ENCODE measurements at regions of chr10 and their contacts with region 1.

Region 1: DNA sequence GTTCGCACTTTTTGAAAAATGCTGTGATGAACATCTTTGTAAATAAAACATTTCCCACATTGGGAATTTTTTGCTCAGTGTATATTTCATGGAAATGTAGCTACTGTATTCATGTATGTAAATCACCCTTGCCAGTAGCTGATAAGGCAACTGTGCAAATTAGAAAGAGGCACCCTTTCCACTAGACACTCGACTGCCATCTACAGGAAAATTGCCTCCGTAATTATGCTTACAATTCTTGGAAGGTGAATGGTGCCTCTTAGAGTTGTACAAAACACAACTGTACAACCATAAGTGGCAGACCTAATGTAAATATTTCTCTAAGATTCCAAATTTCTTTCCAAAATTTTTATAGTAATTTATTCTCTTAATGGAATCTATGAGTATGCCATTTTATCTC is 491.7 kb downstream of the CCSER2 start:
- DNase-seq: peak in 1 of 2 experiments; percentile 28
- H3K4me3 ChIP-seq: no peak overlapping the region
- H3K4me3 Mint-ChIP-seq: no peak overlapping the region
- H3K27ac Mint-ChIP-seq: no peak overlapping the region
- H3K4me1 ChIP-seq: no peaks in the 10 kb centered on the region; the same call in 1 of the 2 replicates
- H3K4me1 Mint-ChIP-seq: peaks cover 17% of the 10 kb centered on the region
- H3K27me3 ChIP-seq: no peaks in the 10 kb centered on the region
- H3K27me3 Mint-ChIP-seq: peaks cover 3% of the 10 kb centered on the region
- CTCF ChIP-seq: peak; percentile 40 to 48

Region 2: GRCh38 chr10:84574102-84574501 is 246.0 kb before region 1 on chr10:
- CTCF ChIA-PET with region 1: no interaction called
- POLR2A ChIA-PET with region 1: no interaction called
- intact Hi-C with region 1: no loop called
- DNase-seq: no peak
- H3K4me3 ChIP-seq: no peak overlapping the region
- H3K4me3 Mint-ChIP-seq: no peak overlapping the region
- H3K27ac Mint-ChIP-seq: no peak overlapping the region
- H3K4me1 ChIP-seq: no peaks in the 10 kb centered on the region
- H3K4me1 Mint-ChIP-seq: no peaks in the 10 kb centered on the region
- H3K27me3 ChIP-seq: no peaks in the 10 kb centered on the region
- H3K27me3 Mint-ChIP-seq: peaks cover 1% of the 10 kb centered on the region
- CTCF ChIP-seq: peak; percentile 16 to 19

Region 3: GRCh38 chr10:84783386-84783785 is 36.7 kb before region 1 on chr10:
- CTCF ChIA-PET with region 1: no interaction called
- POLR2A ChIA-PET with region 1: no interaction called
- intact Hi-C with region 1: loop called (anchors 1 kb)
- DNase-seq: peak; percentile 45 to 57
- H3K4me3 ChIP-seq: no peak overlapping the region
- H3K4me3 Mint-ChIP-seq: no peak overlapping the region
- H3K27ac Mint-ChIP-seq: no peak overlapping the region
- H3K4me1 ChIP-seq: peaks cover 13% of the 10 kb centered on the region
- H3K4me1 Mint-ChIP-seq: peaks cover 11% of the 10 kb centered on the region
- H3K27me3 ChIP-seq: no peaks in the 10 kb centered on the region; the same call in 1 of the 2 replicates
- H3K27me3 Mint-ChIP-seq: no peaks in the 10 kb centered on the region
- CTCF ChIP-seq: peak; percentile 75 to 85